HepG2 (cell line): ENCODE measurements at regions of chr16 and their contacts with region 1.

Region 1: GRCh38 chr16:474420-475122 is 49.1 kb downstream of the RAB11FIP3 start:
- DNase-seq: peak; percentile 87
- ATAC-seq: peak; percentile 86
- H3K4me3 ChIP-seq: peak overlapping the region; percentile 64 to 73 (median 66)
- H3K27ac ChIP-seq: peak overlapping the region; percentile 79
- H3K4me1 ChIP-seq: peaks cover 55% of the 10 kb centered on the region
- H3K27me3 ChIP-seq: no peaks in the 10 kb centered on the region
- CTCF ChIP-seq: peak; percentile 21; the same call in 1 of the 2 replicates
- EP300 ChIP-seq: peak in 1 of 2 experiments; percentile 70; a peak in 2 of 4 replicates
- POLR2A ChIP-seq: peak; percentile 64 to 72
- RAD21 ChIP-seq: no peak

Region 2: GRCh38 chr16:425082-425718 is 49.4 kb before region 1 on chr16 and contains the start of gene RAB11FIP3:
- CTCF ChIA-PET with region 1: no interaction called
- POLR2A ChIA-PET with region 1: interaction called, 14 read pairs
- in situ Hi-C with region 1: no loop called
- intact Hi-C with region 1: no loop called
- DNase-seq: peak; percentile 53
- ATAC-seq: peak; percentile 83
- H3K4me3 ChIP-seq: peak within 1 kb of the TSS; percentile 66 to 95 (median 87)
- H3K27ac ChIP-seq: peak within 1 kb of the TSS; percentile 45
- H3K4me1 ChIP-seq: peaks cover 51% of the 10 kb centered on the region
- H3K27me3 ChIP-seq: no peaks in the 10 kb centered on the region; a peak in 1 of 5 replicates
- CTCF ChIP-seq: peak; percentile 68
- EP300 ChIP-seq: no peak
- POLR2A ChIP-seq: peak in 1 of 2 experiments; percentile 85; a peak in 2 of 4 replicates
- RAD21 ChIP-seq: peak; percentile 35; the same call in 1 of the 2 replicates
- total RNA-seq, gene RAB11FIP3: 48.4 and 57.6 TPM in 2 replicates

Region 3: GRCh38 chr16:450385-451134 is 24.0 kb before region 1 on chr16:
- CTCF ChIA-PET with region 1: no interaction called
- POLR2A ChIA-PET with region 1: interaction called, 11 read pairs
- in situ Hi-C with region 1: no loop called
- intact Hi-C with region 1: no loop called
- DNase-seq: peak; percentile 39
- ATAC-seq: peak; percentile 48
- H3K4me3 ChIP-seq: peak overlapping the region in 1 of 3 experiments; percentile 40; a peak in 1 of 6 replicates
- H3K27ac ChIP-seq: peak overlapping the region; percentile 56
- H3K4me1 ChIP-seq: peaks cover 26% of the 10 kb centered on the region
- H3K27me3 ChIP-seq: no peaks in the 10 kb centered on the region
- CTCF ChIP-seq: no peak
- EP300 ChIP-seq: no peak
- POLR2A ChIP-seq: no peak
- RAD21 ChIP-seq: no peak

Region 4: DNA sequence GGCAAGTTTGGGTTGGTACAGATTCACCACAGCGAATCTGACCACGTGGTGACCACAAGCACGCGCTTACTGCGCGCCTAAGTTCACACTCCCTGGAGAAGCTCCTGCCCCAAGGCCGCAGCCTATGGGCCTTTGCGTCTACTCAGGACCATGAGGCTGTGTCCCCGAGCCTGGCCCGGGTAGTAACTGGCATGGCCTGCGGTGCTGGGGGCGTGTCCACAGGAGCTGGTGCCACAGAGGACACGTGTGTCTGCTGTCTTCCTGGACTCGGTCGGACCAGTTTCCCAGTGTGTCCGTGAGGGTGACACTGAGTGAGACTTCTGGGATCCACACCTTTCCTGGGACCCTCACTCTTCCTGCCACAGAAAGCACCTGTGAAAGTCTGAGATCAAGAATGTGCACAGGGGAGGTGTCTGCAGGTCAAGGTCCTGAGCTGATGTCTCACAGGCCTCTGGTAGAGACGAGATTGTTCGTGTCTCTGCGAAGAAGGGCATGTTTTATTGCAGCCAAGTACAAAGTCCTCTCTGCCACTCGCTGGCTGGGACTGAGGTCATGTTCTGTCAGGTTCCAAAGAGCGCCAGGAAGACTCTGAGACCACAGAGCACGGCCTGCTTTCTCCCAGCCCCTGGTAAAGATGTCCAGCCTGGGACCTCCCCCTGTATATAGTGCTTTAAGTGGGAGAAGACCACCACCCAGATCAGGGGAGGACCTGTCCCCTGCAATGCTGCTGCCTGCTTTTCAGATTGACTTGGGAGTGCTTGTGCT is 27.8 kb after region 1 on chr16:
- CTCF ChIA-PET with region 1: no interaction called
- POLR2A ChIA-PET with region 1: interaction called, 21 read pairs
- in situ Hi-C with region 1: no loop called
- intact Hi-C with region 1: no loop called
- DNase-seq: peak; percentile 86
- ATAC-seq: peak; percentile 82
- H3K4me3 ChIP-seq: peak overlapping the region; percentile 24 to 65 (median 44)
- H3K27ac ChIP-seq: peak overlapping the region; percentile 93
- H3K4me1 ChIP-seq: peaks cover 59% of the 10 kb centered on the region
- H3K27me3 ChIP-seq: no peaks in the 10 kb centered on the region
- CTCF ChIP-seq: 0 out of 2 replicates have a peak, but pooled peaks have one; percentile 23
- EP300 ChIP-seq: peak; percentile 17 to 56; a peak in 2 of 4 replicates
- POLR2A ChIP-seq: peak; percentile 41 to 67; a peak in 3 of 4 replicates
- RAD21 ChIP-seq: no peak

Region 5: GRCh38 chr16:518858-519257 is 44.3 kb after region 1 on chr16:
- CTCF ChIA-PET with region 1: no interaction called
- POLR2A ChIA-PET with region 1: no interaction called
- in situ Hi-C with region 1: no loop called
- intact Hi-C with region 1: no loop called
- DNase-seq: no peak
- ATAC-seq: no peak
- H3K4me3 ChIP-seq: no peak overlapping the region
- H3K27ac ChIP-seq: no peak overlapping the region
- H3K4me1 ChIP-seq: peaks cover 4% of the 10 kb centered on the region; the same call in 1 of the 2 replicates
- H3K27me3 ChIP-seq: no peaks in the 10 kb centered on the region
- CTCF ChIP-seq: no peak
- EP300 ChIP-seq: no peak
- POLR2A ChIP-seq: 0 out of 4 replicates have a peak, but pooled peaks of 1 of the 2 experiments have one; percentile 34
- RAD21 ChIP-seq: no peak